IMR-90 (cell line): ENCODE measurements at regions of chr7 and their contacts with region 1.

Region 1: DNA sequence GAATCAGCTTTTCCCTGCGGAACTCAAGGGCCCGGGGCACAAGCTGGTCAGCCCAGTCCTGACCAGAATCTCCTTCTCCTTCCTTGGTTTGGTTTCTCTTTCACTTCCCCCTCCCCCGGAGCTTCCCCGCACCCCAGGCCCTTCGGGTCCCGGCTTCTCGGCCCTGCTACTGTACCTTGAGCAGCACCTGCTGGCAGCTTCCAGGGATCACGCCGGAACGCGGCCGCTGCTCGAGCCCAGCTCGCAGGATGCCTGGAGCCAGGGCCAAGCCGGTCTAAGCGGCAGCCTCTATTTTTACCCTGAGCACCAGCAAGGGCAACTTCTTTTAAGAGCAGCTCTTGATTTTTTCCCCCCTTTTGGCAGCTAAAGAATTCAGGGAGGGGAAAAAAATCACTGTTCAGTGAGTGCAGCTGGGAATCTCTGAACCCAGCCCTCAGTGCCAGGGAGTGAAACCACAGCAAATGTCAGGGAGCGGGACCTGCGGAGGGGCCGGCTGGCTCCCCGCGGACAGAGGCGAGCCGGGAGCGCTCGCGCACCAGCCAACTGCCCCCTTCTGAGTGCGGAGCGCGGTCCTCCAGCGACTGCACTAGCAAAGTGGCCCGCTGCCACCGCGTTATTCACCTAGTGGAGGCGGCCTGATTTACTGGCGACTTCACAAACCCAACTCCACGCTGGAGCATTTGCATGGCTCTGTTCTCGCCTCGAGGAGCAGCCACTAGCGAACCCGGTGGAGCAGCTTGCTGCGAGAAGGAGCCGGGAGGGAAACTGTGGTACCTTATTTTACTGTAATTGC is 2.4 kb upstream of the INHBA start:
- DNase-seq: peak; percentile 93
- ATAC-seq: peak; percentile 80
- H3K4me3 ChIP-seq: peak overlapping the region; percentile 60
- H3K27ac ChIP-seq: peak overlapping the region; percentile 96
- H3K4me1 ChIP-seq: peaks cover 22% of the 10 kb centered on the region
- H3K27me3 ChIP-seq: no peaks in the 10 kb centered on the region
- CTCF ChIP-seq: peak; percentile 88
- POLR2A ChIP-seq: peak; percentile 54; the same call in 1 of the 2 replicates
- RAD21 ChIP-seq: peak; percentile 93

Region 2: GRCh38 chr7:40329601-40330153 is 1375.6 kb before region 1 on chr7:
- CTCF ChIA-PET with region 1: interaction called, 11 read pairs
- POLR2A ChIA-PET with region 1: no interaction called
- dilution Hi-C with region 1: no loop called
- in situ Hi-C with region 1: loop called (anchors 5 kb)
- intact Hi-C with region 1: loop called (anchors 1 kb)
- DNase-seq: peak; percentile 74
- ATAC-seq: peak; percentile 69
- H3K4me3 ChIP-seq: no peak overlapping the region
- H3K27ac ChIP-seq: no peak overlapping the region
- H3K4me1 ChIP-seq: peaks cover 2% of the 10 kb centered on the region; the same call in 1 of the 2 replicates
- H3K27me3 ChIP-seq: no peaks in the 10 kb centered on the region
- CTCF ChIP-seq: peak; percentile 80
- POLR2A ChIP-seq: no peak
- RAD21 ChIP-seq: peak; percentile 95

Region 3: GRCh38 chr7:40604601-40605438 is 1100.5 kb before region 1 on chr7:
- CTCF ChIA-PET with region 1: no interaction called
- POLR2A ChIA-PET with region 1: no interaction called
- dilution Hi-C with region 1: no loop called
- in situ Hi-C with region 1: no loop called
- intact Hi-C with region 1: loop called (anchors 5 kb)
- DNase-seq: peak; percentile 52
- ATAC-seq: peak; percentile 96
- H3K4me3 ChIP-seq: no peak overlapping the region
- H3K27ac ChIP-seq: no peak overlapping the region
- H3K4me1 ChIP-seq: peaks cover 2% of the 10 kb centered on the region; the same call in 1 of the 2 replicates
- H3K27me3 ChIP-seq: no peaks in the 10 kb centered on the region
- CTCF ChIP-seq: peak; percentile 78
- POLR2A ChIP-seq: no peak
- RAD21 ChIP-seq: peak; percentile 83

Region 4: GRCh38 chr7:40763318-40764287 is 941.7 kb before region 1 on chr7:
- CTCF ChIA-PET with region 1: interaction called, 13 read pairs
- POLR2A ChIA-PET with region 1: no interaction called
- dilution Hi-C with region 1: no loop called
- in situ Hi-C with region 1: loop called (anchors 10 kb)
- intact Hi-C with region 1: loop called (anchors 2 kb)
- DNase-seq: peak; percentile 86
- ATAC-seq: peak; percentile 87
- H3K4me3 ChIP-seq: peak overlapping the region; percentile 34; the same call in 1 of the 2 replicates
- H3K27ac ChIP-seq: peak overlapping the region; percentile 91
- H3K4me1 ChIP-seq: peaks cover 6% of the 10 kb centered on the region
- H3K27me3 ChIP-seq: no peaks in the 10 kb centered on the region
- CTCF ChIP-seq: peak; percentile 60
- POLR2A ChIP-seq: no peak
- RAD21 ChIP-seq: peak; percentile 78

Region 5: GRCh38 chr7:40918701-40919271 is 786.5 kb before region 1 on chr7:
- CTCF ChIA-PET with region 1: interaction called, 4 read pairs
- POLR2A ChIA-PET with region 1: no interaction called
- dilution Hi-C with region 1: no loop called
- in situ Hi-C with region 1: no loop called
- intact Hi-C with region 1: loop called (anchors 2 kb)
- DNase-seq: peak; percentile 93
- ATAC-seq: peak; percentile 88
- H3K4me3 ChIP-seq: no peak overlapping the region
- H3K27ac ChIP-seq: peak overlapping the region; percentile 79
- H3K4me1 ChIP-seq: peaks cover 17% of the 10 kb centered on the region
- H3K27me3 ChIP-seq: no peaks in the 10 kb centered on the region
- CTCF ChIP-seq: no peak
- POLR2A ChIP-seq: no peak
- RAD21 ChIP-seq: no peak

Region 6: DNA sequence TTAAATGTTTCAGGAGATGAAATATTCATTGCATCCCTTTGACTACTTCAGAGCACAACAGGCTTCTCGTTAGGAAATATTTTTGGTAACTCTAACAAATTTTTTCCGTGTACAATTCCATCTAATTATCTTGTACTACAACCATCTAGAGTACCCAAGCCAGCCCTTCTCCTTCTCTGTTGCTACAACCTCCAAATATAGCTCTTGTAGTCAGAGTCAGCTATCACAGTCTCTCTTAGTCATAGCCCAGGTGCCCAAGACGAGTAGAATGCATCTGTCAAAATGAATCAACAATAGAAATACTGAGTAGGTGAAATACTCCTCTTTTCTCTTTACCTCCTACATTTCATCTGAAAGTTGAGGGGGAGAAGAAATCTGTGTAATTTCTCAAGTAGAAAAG is 76.4 kb before region 1 on chr7:
- CTCF ChIA-PET with region 1: no interaction called
- POLR2A ChIA-PET with region 1: no interaction called
- dilution Hi-C with region 1: no loop called
- in situ Hi-C with region 1: no loop called
- intact Hi-C with region 1: no loop called
- DNase-seq: peak; percentile 66
- ATAC-seq: peak; percentile 54; the same call in 1 of the 2 replicates
- H3K4me3 ChIP-seq: no peak overlapping the region
- H3K27ac ChIP-seq: no peak overlapping the region
- H3K4me1 ChIP-seq: no peaks in the 10 kb centered on the region; the same call in 1 of the 2 replicates
- H3K27me3 ChIP-seq: no peaks in the 10 kb centered on the region
- CTCF ChIP-seq: no peak
- POLR2A ChIP-seq: no peak
- RAD21 ChIP-seq: no peak

Region 7: GRCh38 chr7:41809940-41810576 is 104.8 kb after region 1 on chr7:
- CTCF ChIA-PET with region 1: no interaction called
- POLR2A ChIA-PET with region 1: no interaction called
- dilution Hi-C with region 1: no loop called
- in situ Hi-C with region 1: no loop called
- intact Hi-C with region 1: no loop called
- DNase-seq: no peak
- ATAC-seq: no peak
- H3K4me3 ChIP-seq: no peak overlapping the region
- H3K27ac ChIP-seq: no peak overlapping the region
- H3K4me1 ChIP-seq: no peaks in the 10 kb centered on the region
- H3K27me3 ChIP-seq: no peaks in the 10 kb centered on the region
- CTCF ChIP-seq: no peak
- POLR2A ChIP-seq: no peak
- RAD21 ChIP-seq: no peak

Region 8: DNA sequence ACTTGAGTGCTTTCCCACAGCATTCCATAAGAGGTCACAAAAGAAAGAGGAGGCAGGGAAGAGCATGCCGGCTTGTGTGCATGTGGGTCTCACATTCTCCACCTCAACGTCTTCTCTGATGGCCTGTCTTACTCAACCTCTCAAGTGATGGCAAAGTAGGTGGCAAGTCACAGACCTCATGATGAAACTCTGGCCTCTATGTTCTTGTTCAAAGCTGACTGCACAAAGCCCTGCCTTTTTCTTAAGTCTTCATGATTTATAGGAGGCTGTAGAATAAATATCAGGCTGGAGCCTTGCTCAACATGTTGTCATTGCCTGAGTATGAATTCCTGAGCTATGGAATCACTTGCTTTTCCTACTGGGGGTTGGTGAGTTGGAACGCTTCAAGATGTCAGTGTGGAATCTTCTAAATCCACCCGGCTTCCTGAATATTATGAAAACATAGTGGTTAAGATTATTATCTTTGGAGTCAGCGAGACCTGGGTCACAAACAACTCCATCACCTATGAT is 211.2 kb after region 1 on chr7:
- CTCF ChIA-PET with region 1: interaction called, 3 read pairs
- POLR2A ChIA-PET with region 1: no interaction called
- dilution Hi-C with region 1: no loop called
- in situ Hi-C with region 1: no loop called
- intact Hi-C with region 1: loop called (anchors 2 kb)
- DNase-seq: peak; percentile 99
- ATAC-seq: peak; percentile 75
- H3K4me3 ChIP-seq: no peak overlapping the region
- H3K27ac ChIP-seq: peak overlapping the region; percentile 85
- H3K4me1 ChIP-seq: peaks cover 26% of the 10 kb centered on the region
- H3K27me3 ChIP-seq: no peaks in the 10 kb centered on the region
- CTCF ChIP-seq: no peak
- POLR2A ChIP-seq: peak; percentile 42; the same call in 1 of the 2 replicates
- RAD21 ChIP-seq: no peak; the same call in 1 of the 2 replicates